ENCODE measurements at regions of chr6 and their contacts with region 1.

Region 1: DNA sequence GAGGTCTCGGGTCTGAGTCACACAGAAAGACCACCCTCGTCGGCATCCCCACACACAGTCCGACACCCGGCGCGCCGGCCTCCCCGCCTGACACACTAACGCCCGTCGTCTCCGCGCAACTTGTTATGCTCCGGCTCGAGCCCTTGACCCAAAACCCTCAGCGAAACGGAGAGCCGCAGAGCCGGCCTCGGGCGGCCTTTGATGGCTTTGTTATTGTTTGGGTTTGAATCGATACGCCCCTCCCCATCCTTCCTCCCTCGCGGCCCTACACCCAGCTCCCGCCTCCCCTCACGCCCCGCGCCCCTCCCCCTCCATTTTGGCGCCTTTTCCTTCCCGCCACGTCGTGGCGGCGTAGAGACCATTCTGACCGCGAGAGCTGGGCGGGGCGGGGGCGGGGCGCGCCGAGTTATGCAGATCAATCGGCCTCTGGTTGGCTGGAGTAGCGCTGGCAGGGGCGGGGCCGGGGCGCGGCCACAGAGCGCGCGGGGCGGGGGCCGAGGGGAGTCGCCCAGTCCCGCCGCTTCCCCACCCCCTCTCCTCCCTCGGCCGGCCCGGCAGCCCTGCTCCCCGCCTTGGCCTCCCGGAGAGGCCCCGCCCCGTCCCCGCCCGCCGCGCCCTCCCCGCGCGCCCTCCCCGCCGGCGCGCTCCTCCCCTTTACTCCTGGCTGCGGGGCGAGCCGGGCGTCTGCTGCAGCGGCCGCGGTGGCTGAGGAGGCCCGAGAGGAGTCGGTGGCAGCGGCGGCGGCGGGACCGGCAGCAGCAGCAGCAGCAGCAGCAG is at the start of gene PIM1:
- DNase-seq: peak; percentile 62
- ATAC-seq: peak; percentile 89
- H3K4me3 ChIP-seq: peak within 1 kb of the TSS; percentile 80 to 81
- H3K27ac ChIP-seq: peak within 1 kb of the TSS; percentile 96
- H3K4me1 ChIP-seq: peaks cover 28% of the 10 kb centered on the region
- H3K27me3 ChIP-seq: no peaks in the 10 kb centered on the region
- CTCF ChIP-seq: no peak
- total RNA-seq, gene PIM1: 42.1 TPM

Region 2: DNA sequence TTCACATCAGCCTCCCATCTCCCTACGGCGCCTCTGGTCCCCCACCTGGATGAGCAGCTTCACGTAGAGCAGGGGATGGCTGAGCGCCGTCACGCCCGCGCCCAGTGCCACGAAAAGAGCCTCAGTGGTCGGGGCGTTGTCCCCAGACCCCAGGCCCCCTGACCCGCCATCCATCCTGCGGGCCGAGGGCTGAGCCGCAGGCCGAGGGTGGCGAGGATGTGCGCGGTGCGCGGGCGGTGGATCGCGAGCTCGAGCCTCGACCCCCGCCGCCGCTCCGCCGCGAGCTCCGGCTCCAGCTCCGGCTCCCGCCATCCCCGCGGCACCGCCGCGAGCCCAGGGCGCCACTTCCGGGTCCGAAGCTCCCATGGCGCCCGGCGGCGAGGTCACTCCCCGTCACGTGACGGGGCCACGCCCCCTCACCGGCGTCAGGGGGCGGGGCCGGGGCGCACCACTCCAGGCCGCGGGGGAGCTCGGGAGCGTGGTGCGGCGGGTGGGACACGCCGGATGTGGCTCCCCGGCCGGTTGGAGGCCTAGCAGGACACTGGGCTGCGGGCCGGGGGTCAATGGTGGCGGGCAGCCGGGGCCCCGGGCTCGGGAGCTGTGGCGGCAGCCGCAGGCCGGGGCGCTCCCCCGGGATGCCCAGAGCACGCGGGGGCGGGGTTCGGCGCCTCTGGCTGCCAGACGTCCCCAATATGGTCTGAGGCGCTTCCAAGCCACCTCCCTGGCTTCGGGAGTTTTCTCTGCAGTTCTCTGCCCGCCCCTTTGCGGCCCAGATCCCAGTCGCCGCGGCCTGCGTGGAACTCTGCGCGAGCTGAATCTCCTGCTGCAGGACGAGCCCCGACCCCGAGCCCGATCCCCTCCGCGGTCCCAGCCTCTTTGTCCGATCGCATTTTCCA is 183.6 kb before region 1 on chr6 and contains the start of gene MTCH1:
- CTCF ChIA-PET with region 1: no interaction called
- POLR2A ChIA-PET with region 1: no interaction called
- in situ Hi-C with region 1: no loop called
- intact Hi-C with region 1: no loop called
- DNase-seq: no peak
- ATAC-seq: peak; percentile 95
- H3K4me3 ChIP-seq: peak within 1 kb of the TSS; percentile 72 to 97
- H3K27ac ChIP-seq: peak within 1 kb of the TSS; percentile 94
- H3K4me1 ChIP-seq: peaks cover 23% of the 10 kb centered on the region
- H3K27me3 ChIP-seq: no peaks in the 10 kb centered on the region
- CTCF ChIP-seq: no peak
- total RNA-seq, gene MTCH1: 223 TPM

Region 3: GRCh38 chr6:37024740-37025274 is 144.9 kb before region 1 on chr6:
- CTCF ChIA-PET with region 1: interaction called, 8 read pairs
- POLR2A ChIA-PET with region 1: interaction called, 4 read pairs
- in situ Hi-C with region 1: no loop called
- intact Hi-C with region 1: loop called (anchors 2 kb)
- DNase-seq: no peak
- ATAC-seq: no peak
- H3K4me3 ChIP-seq: no peak overlapping the region
- H3K27ac ChIP-seq: 0 out of 2 replicates have a peak overlapping the region, but pooled peaks have one; percentile 26
- H3K4me1 ChIP-seq: 0 out of 2 replicates have a peak, but pooled peaks cover 10% of the 10 kb centered on the region
- H3K27me3 ChIP-seq: no peaks in the 10 kb centered on the region
- CTCF ChIP-seq: no peak

Region 4: GRCh38 chr6:37051138-37052026 is 118.3 kb before region 1 on chr6:
- CTCF ChIA-PET with region 1: interaction called, 23 read pairs
- POLR2A ChIA-PET with region 1: no interaction called
- in situ Hi-C with region 1: no loop called
- intact Hi-C with region 1: loop called (anchors 2 kb)
- DNase-seq: no peak
- ATAC-seq: peak; percentile 88
- H3K4me3 ChIP-seq: no peak overlapping the region
- H3K27ac ChIP-seq: peak overlapping the region; percentile 68
- H3K4me1 ChIP-seq: peaks cover 5% of the 10 kb centered on the region; the same call in 1 of the 2 replicates
- H3K27me3 ChIP-seq: no peaks in the 10 kb centered on the region
- CTCF ChIP-seq: peak; percentile 97

Region 5: DNA sequence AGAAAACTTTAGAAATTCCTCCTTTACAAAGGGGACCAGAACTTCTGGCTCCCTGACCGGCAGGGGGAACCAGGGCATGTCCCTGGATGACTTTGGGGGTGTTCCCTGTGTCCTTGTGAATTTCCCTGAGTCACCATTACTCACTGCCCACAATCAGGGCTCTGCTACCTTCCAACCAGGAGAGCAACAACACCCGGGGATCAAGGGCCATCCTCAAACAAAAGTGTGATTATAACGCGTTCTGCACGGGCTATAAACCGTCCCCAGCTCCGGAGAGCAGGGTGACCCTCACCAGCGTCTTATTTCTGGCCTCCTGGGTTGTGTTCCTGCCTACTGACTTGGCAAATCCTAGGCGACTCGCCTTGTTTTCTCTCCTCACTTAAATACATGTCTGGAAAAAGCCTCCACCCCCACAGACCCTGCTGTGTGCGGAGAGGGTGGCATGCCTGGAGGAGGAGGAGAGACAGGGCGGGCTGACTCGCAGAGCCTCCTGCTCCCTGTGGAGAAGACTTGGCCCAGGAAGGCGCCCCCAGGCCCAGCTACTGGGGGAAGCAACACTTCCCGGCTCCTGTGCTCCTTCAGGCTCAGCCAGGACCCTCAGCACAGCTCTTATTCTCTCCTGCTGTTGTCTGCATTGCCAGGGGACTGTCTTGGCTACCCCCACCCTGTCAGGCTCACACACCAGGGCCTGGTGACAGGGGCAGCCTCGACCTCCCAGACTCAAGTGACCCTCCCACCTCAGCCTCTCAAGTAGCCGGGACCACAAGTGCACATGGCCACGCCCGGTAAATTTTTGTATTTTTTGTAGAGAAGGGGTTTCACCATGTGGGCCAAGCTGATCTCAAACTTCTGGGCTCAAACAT is 110.1 kb before region 1 on chr6:
- CTCF ChIA-PET with region 1: interaction called, 4 read pairs
- POLR2A ChIA-PET with region 1: interaction called, 3 read pairs
- in situ Hi-C with region 1: no loop called
- intact Hi-C with region 1: loop called (anchors 2 kb)
- DNase-seq: peak; percentile 90
- ATAC-seq: peak; percentile 92
- H3K4me3 ChIP-seq: peak overlapping the region in 1 of 2 experiments; percentile 36; a peak in 2 of 4 replicates
- H3K27ac ChIP-seq: peak overlapping the region; percentile 93
- H3K4me1 ChIP-seq: peaks cover 51% of the 10 kb centered on the region
- H3K27me3 ChIP-seq: no peaks in the 10 kb centered on the region
- CTCF ChIP-seq: no peak; the same call in 1 of the 2 replicates

Region 6: GRCh38 chr6:37127961-37128862 is 41.5 kb before region 1 on chr6:
- CTCF ChIA-PET with region 1: interaction called, 3 read pairs
- POLR2A ChIA-PET with region 1: interaction called, 10 read pairs
- in situ Hi-C with region 1: no loop called
- intact Hi-C with region 1: loop called (anchors 5 kb)
- DNase-seq: no peak
- ATAC-seq: peak; percentile 53
- H3K4me3 ChIP-seq: no peak overlapping the region
- H3K27ac ChIP-seq: peak overlapping the region; percentile 98
- H3K4me1 ChIP-seq: peaks cover 59% of the 10 kb centered on the region
- H3K27me3 ChIP-seq: no peaks in the 10 kb centered on the region
- CTCF ChIP-seq: no peak

Region 7: GRCh38 chr6:37134606-37135191 is 35.0 kb before region 1 on chr6:
- CTCF ChIA-PET with region 1: interaction called, 3 read pairs
- POLR2A ChIA-PET with region 1: no interaction called
- in situ Hi-C with region 1: no loop called
- intact Hi-C with region 1: loop called (anchors 5 kb)
- DNase-seq: peak; percentile 95
- ATAC-seq: peak; percentile 77
- H3K4me3 ChIP-seq: peak overlapping the region in 1 of 2 experiments; percentile 17; a peak in 1 of 4 replicates
- H3K27ac ChIP-seq: peak overlapping the region; percentile 96
- H3K4me1 ChIP-seq: peaks cover 74% of the 10 kb centered on the region
- H3K27me3 ChIP-seq: no peaks in the 10 kb centered on the region
- CTCF ChIP-seq: no peak

Region 8: DNA sequence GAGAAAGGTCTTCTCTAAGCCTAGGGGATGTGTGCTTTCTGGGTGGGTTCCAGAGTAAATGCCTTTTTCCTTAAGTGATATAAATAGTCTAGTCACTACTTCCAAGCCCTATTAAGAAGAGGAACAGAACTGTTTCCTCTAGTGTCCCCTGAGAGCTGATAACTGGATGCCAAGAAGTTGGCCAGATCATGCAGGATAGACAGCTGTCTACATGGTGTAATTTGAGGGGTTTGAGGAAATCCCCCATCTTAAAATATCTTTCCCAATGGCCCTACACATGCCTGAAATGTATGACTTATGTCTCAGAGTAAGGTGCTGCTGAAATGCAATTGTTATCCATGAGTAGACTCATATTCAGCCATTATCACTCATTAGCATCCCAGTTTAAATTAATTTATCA is 19.9 kb before region 1 on chr6:
- CTCF ChIA-PET with region 1: interaction called, 4 read pairs
- POLR2A ChIA-PET with region 1: interaction called, 10 read pairs
- in situ Hi-C with region 1: no loop called
- intact Hi-C with region 1: no loop called
- DNase-seq: no peak
- ATAC-seq: no peak
- H3K4me3 ChIP-seq: no peak overlapping the region
- H3K27ac ChIP-seq: no peak overlapping the region
- H3K4me1 ChIP-seq: no peaks in the 10 kb centered on the region
- H3K27me3 ChIP-seq: no peaks in the 10 kb centered on the region
- CTCF ChIP-seq: no peak

Measured in Panc1 (cell line).